ENCODE measurements at regions of chr20 and their contacts with region 1.

Region 1: GRCh38 chr20:18276821-18277220 is 11.5 kb upstream of the ZNF133 start:
- DNase-seq: peak; percentile 74
- ATAC-seq: peak; percentile 78

Region 2: GRCh38 chr20:17504898-17505635 is 771.8 kb before region 1 on chr20:
- intact Hi-C with region 1: loop called (anchors 10 kb)
- DNase-seq: peak; percentile 79
- ATAC-seq: peak; percentile 90

Region 3: DNA sequence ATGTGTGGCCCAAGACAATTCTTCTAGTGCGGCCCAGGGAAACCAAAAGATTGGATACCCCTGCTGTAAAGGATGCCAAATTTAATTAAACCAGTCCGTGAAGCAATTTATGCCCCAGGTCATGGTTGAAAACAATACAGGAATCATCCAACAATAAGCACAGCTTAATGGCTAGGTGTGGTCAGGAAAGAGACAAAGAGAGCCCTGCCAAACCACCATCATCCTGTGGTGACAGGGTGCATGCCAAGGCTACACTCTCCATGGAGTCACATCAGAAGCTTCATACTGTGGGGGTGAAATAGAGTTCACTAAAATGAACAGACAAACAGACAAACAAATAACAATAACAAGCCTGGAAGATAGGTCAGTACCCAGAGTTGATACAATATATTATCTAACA is 127.4 kb after region 1 on chr20:
- intact Hi-C with region 1: no loop called
- DNase-seq: no peak
- ATAC-seq: no peak